ENCODE measurements at regions of chr17 and their contacts with region 1.

Region 1: DNA sequence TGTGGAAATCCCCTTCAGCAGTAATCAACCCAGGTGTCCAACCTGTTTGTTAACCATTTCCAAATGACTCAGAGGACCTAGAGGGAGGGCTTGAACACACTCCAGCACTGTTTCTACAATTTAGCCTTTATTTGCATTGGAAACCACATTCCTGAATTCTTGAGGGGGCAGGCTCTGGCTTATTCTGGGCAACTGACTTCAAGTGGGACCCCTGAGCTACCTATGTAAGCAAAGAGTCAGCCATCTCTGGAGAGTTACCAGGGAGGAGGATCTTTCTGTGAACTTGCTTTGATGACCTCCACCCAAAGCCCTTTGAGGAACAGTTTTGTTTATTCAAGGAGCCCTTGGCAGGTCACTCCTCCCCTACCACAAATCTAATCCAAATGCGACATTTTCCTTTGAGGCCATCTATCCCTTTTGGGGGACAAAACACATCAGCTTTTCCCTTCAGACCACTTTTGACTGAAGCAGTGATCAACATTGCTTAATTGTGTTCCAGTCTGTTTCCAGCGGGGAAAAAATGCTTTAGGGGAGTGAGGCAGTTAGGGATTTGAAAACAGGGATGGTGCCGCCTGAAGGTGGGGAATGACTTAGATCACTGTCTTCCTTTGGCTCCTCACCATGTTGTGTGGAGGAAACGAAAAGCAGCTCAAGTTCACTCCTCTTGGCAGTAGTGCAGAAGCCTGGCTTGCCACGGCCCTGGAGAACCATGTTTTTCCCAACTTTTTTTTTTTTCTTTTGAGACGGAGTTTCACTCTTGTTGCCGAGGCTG is 46.2 kb downstream of the TUBD1 start:
- DNase-seq: peak in 4 of 5 donors; percentile 28 to 74 (median 44)
- H3K4me3 ChIP-seq: peak overlapping the region in 1 of 2 donors; percentile 1
- H3K4me3 Mint-ChIP-seq: peak overlapping the region in 7 of 8 donors; percentile 21 to 70 (median 39)
- H3K27ac ChIP-seq: peak overlapping the region; percentile 62
- H3K27ac Mint-ChIP-seq: peak overlapping the region; percentile 82 to 90 (median 86)
- H3K4me1 ChIP-seq: peaks cover 74% of the 10 kb centered on the region
- H3K4me1 Mint-ChIP-seq: peaks cover 43 to 73% (median 60%) of the 10 kb centered on the region in 4 donors
- H3K27me3 ChIP-seq: no peaks in the 10 kb centered on the region
- H3K27me3 Mint-ChIP-seq: no peaks in the 10 kb centered on the region

Region 2: GRCh38 chr17:59800530-59800942 is 46.0 kb before region 1 on chr17:
- CTCF ChIA-PET with region 1: no interaction called
- POLR2A ChIA-PET with region 1: interaction called, 20 read pairs
- intact Hi-C with region 1: no loop called
- DNase-seq: no peak
- H3K4me3 ChIP-seq: no peak overlapping the region
- H3K4me3 Mint-ChIP-seq: no peak overlapping the region
- H3K27ac ChIP-seq: no peak overlapping the region
- H3K27ac Mint-ChIP-seq: peak overlapping the region in 2 of 7 donors; percentile 41 to 42
- H3K4me1 ChIP-seq: no peaks in the 10 kb centered on the region
- H3K4me1 Mint-ChIP-seq: peaks cover 7 to 17% (median 12%) of the 10 kb centered on the region in 4 donors
- H3K27me3 ChIP-seq: no peaks in the 10 kb centered on the region
- H3K27me3 Mint-ChIP-seq: no peaks in the 10 kb centered on the region

Region 3: DNA sequence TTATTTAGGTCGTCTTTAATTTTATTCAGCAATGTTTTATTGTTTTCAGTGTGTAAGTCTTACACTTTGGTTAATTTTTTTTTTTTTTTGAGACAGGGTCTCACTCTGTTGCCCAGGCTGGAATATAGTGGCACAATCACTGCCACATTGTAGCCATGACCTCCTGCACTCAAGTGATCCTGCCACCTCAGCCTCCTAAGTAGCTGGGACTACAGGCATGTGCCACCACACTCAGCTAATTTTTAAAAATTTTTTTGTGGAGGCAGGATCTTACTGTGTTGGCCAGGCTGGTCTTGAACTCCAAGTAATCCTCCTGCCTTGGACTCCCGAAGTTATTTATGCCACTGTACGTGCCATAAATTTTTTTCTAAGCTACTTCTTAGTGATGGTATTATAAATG is 60.9 kb after region 1 on chr17:
- CTCF ChIA-PET with region 1: no interaction called
- POLR2A ChIA-PET with region 1: no interaction called
- intact Hi-C with region 1: no loop called
- DNase-seq: no peak
- H3K4me3 ChIP-seq: no peak overlapping the region
- H3K4me3 Mint-ChIP-seq: no peak overlapping the region
- H3K27ac ChIP-seq: no peak overlapping the region
- H3K27ac Mint-ChIP-seq: no peak overlapping the region
- H3K4me1 ChIP-seq: peaks cover 10% of the 10 kb centered on the region
- H3K4me1 Mint-ChIP-seq: peaks cover 13 to 28% (median 14%) of the 10 kb centered on the region in 4 donors
- H3K27me3 ChIP-seq: no peaks in the 10 kb centered on the region
- H3K27me3 Mint-ChIP-seq: no peaks in the 10 kb centered on the region

Measured in CD4-positive, alpha-beta memory T cell (primary cell).